Left ventricle myocardium inferior (tissue), 1 donor: ENCODE measurements at regions of chr5 and their contacts with region 1.

Region 1: DNA sequence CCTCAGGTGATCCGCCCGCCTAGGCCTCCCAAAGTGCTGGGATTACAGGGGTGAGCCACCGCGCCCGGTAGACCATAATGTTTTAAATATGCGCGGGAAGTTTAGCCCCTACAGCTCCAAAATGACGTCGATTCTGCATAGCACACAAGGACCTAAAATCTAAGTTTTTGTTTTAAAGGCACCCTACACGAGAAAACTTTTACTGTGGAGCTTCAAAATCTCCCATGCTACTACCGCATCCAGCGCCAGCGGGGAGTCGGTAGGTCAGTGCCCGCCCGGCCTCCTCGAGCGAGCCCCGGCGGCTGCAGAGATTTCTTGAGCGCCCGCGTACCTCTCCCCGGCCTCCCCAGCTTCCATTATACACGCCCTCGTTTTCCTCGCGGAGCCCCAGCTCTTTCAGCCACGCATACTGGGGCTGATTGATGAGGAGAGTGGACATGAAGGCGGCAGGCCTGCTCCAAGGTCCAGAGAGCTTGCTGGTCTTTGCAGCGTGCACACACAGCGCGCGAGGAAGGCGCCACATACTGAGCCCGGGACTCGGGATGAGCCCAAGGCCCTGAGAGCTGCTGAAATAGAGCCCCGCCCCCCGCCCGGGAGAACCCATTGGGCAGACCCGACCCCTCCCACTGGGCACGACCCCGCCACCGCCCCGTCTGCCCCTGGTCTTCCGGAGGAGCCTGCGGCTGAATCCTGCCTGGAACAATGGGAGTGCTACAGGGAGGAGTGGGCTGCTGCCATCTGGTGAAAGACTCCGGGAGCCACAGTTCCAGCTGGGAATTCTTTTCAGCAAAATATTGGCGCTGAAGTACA is at the start of gene ALDH7A1:
- DNase-seq: peak; percentile 89
- H3K4me3 ChIP-seq: peak within 1 kb of the TSS; percentile 74
- H3K27ac ChIP-seq: peak within 1 kb of the TSS; percentile 89
- H3K4me1 ChIP-seq: peaks cover 19% of the 10 kb centered on the region
- H3K27me3 ChIP-seq: no peaks in the 10 kb centered on the region
- CTCF ChIP-seq: peak; percentile 63
- total RNA-seq, gene ALDH7A1: 30.5 TPM

Region 2: DNA sequence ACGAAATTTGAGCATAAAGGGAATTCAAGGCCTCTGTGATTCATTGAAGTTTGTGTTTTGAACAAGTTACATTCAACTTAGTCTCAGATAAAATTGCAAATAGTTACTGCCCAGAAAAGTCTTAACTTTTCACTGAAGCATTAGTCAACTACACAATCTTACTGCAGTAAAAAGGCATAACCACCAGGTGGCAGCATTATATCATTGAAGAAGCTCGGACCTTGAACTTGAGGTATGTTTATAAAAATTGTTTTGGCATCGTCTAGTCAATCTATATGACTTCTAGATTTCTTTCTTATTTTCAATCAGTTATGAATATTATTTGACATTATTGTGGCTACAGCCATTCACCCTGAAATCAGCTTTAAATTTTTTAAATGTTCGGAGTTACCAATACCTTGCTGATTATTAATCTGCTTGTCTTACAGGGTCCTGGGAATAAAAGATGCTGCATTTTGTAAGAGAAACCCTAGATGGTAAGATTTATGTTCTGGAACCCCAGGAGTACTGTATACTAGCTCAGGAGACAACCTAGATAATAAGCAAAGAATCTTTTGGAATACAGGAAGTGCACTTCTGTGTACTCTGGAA is 255.6 kb before region 1 on chr5:
- intact Hi-C with region 1: loop called (anchors 5 kb)
- DNase-seq: no peak
- H3K4me3 ChIP-seq: no peak overlapping the region
- H3K27ac ChIP-seq: no peak overlapping the region
- H3K4me1 ChIP-seq: no peaks in the 10 kb centered on the region
- H3K27me3 ChIP-seq: no peaks in the 10 kb centered on the region
- CTCF ChIP-seq: peak; percentile 90

Region 3: GRCh38 chr5:127001621-127002296 is 406.9 kb after region 1 on chr5:
- intact Hi-C with region 1: no loop called
- DNase-seq: no peak
- H3K4me3 ChIP-seq: no peak overlapping the region
- H3K27ac ChIP-seq: peak overlapping the region; percentile 43
- H3K4me1 ChIP-seq: peaks cover 73% of the 10 kb centered on the region
- H3K27me3 ChIP-seq: no peaks in the 10 kb centered on the region
- CTCF ChIP-seq: no peak